PC-9 (cell line): ENCODE measurements at regions of chr11 and their contacts with region 1.

Region 1: DNA sequence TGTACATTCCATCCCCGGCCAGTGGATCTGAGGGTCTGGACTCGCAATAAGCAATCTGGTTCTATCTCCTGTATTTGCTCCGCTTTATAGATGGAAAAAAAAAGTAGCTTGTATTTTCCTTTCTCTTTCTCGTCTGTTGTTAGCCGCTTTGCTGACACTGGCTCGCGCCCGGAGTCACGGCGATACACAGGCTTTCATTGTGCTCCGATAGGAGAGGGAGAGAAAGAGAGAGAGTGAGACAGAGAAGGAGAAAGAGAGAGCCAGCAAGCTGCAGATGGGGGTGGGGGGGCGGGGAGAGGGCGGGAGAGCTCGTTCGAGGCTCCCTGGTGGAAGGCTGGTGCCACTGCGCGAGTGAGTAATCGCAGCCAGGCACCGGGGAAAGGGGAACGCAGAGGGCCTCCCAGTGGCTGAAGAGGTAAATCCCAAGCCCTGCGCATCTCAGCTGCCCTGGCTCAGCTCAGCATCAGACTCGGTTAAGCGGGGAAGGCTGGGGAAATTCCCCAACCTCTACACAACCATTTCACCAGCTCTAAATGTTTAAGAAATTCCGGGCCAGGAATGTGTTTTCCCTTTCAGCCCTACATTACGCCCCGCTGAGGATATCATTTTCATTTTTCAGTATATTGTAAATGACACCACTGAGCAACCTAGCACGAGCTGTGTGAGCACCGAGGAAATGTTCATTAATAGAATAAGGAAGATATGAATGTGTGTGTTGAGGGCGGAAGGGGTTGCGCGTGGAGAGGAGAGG is at the start of gene MAML2:
- DNase-seq: peak; percentile 89
- H3K4me3 ChIP-seq: peak within 1 kb of the TSS; percentile 78
- H3K27ac ChIP-seq: peak within 1 kb of the TSS; percentile 70
- H3K4me1 ChIP-seq: peaks cover 35% of the 10 kb centered on the region
- H3K27me3 ChIP-seq: no peaks in the 10 kb centered on the region
- CTCF ChIP-seq: peak; percentile 83
- total RNA-seq, gene MAML2: 17.7 and 28.3 TPM in 2 replicates

Region 2: GRCh38 chr11:95923728-95924413 is 419.3 kb before region 1 on chr11 and contains the start of gene MTMR2:
- CTCF ChIA-PET with region 1: no interaction called
- POLR2A ChIA-PET with region 1: no interaction called
- intact Hi-C with region 1: loop called (anchors 2 kb)
- DNase-seq: peak; percentile 72 to 77
- H3K4me3 ChIP-seq: peak within 1 kb of the TSS; percentile 67
- H3K27ac ChIP-seq: peak within 1 kb of the TSS; percentile 97
- H3K4me1 ChIP-seq: peaks cover 37% of the 10 kb centered on the region
- H3K27me3 ChIP-seq: no peaks in the 10 kb centered on the region
- CTCF ChIP-seq: no peak
- total RNA-seq, gene MTMR2: 41.6 and 60.7 TPM in 2 replicates

Region 3: GRCh38 chr11:95948637-95949036 is 394.5 kb before region 1 on chr11:
- CTCF ChIA-PET with region 1: no interaction called
- POLR2A ChIA-PET with region 1: no interaction called
- intact Hi-C with region 1: no loop called
- DNase-seq: no peak
- H3K4me3 ChIP-seq: no peak overlapping the region
- H3K27ac ChIP-seq: no peak overlapping the region
- H3K4me1 ChIP-seq: no peaks in the 10 kb centered on the region
- H3K27me3 ChIP-seq: no peaks in the 10 kb centered on the region
- CTCF ChIP-seq: no peak

Region 4: GRCh38 chr11:96037405-96037936 is 305.7 kb before region 1 on chr11:
- CTCF ChIA-PET with region 1: no interaction called
- POLR2A ChIA-PET with region 1: interaction called, 8 read pairs
- intact Hi-C with region 1: loop called (anchors 1 kb)
- DNase-seq: peak; percentile 66 to 100
- H3K4me3 ChIP-seq: peak overlapping the region; percentile 38; the same call in 1 of the 2 replicates
- H3K27ac ChIP-seq: peak overlapping the region; percentile 95
- H3K4me1 ChIP-seq: peaks cover 79% of the 10 kb centered on the region
- H3K27me3 ChIP-seq: no peaks in the 10 kb centered on the region
- CTCF ChIP-seq: no peak

Region 5: DNA sequence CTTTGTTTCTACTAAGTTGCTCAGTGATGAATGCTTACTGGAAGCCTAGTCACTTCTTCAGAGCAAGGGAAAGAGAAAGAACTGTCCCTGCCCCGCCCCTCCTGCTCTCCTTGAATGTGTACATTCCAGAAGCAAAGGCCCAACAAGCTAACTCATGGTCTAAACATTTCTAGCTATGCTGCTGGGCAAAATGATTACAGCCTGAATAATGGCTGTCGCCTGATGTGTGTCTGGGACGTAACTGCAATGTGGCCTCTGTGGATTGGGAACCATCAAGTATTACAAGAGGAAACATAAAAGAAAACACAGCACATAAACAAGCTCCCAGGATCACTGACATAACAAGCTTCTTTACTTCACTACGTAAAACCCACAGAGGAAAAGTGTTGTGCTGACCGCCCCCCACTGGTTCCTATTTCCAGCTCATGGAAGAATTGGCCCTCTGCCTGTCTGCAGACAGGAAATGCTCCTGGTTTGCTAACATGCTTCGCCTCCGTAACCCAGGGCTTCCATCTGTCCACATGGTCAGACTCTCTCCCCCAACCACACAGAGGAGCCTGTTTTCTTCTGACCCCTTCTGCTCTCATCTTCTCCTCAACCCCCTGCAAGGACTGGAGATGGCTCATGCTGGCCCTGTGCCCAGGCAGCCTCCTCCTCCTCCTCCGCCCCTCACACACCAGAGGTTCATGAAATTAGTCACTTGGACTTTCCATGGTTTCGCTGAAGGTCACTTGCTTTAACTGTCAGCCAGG is 187.3 kb before region 1 on chr11:
- CTCF ChIA-PET with region 1: interaction called, 15 read pairs
- POLR2A ChIA-PET with region 1: interaction called, 14 read pairs
- intact Hi-C with region 1: loop called (anchors 1 kb)
- DNase-seq: peak; percentile 80 to 95
- H3K4me3 ChIP-seq: no peak overlapping the region
- H3K27ac ChIP-seq: peak overlapping the region; percentile 73
- H3K4me1 ChIP-seq: peaks cover 45% of the 10 kb centered on the region
- H3K27me3 ChIP-seq: no peaks in the 10 kb centered on the region
- CTCF ChIP-seq: no peak; the same call in 1 of the 2 replicates

Region 6: DNA sequence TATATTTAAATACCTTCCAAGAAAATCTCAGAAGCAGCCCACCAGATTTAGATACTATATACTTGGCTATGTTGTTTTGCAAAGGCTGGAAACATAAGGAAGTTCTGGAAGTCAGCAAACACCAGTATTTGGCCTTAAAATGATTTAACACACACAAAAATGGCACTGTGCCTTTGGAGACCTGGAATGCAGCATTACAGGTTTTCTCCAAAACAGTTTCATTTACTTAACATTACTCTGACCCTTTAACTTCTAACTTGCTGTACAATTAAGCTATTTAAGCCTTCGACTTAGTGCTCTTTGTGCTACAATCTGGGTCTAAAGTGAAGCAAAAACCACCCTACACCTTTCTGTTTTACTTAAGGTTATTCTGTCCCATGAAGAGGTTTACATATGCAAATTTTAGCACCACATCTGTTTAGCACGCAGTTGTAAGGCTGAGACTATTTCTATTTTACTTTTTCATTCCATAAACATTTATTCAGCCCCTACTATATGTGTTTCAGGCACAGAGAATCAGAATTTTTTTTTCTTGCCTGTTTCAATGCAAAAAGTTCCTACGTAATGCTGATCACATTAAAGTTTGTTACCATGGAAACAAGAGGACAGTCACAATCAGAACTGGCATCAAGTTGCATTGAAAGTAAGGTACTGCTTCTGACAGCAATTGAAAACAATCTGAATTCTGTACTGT is 70.5 kb before region 1 on chr11:
- CTCF ChIA-PET with region 1: no interaction called
- POLR2A ChIA-PET with region 1: interaction called, 32 read pairs
- intact Hi-C with region 1: loop called (anchors 2 kb)
- DNase-seq: peak; percentile 43 to 97
- H3K4me3 ChIP-seq: peak overlapping the region; percentile 36
- H3K27ac ChIP-seq: peak overlapping the region; percentile 94
- H3K4me1 ChIP-seq: peaks cover 61% of the 10 kb centered on the region
- H3K27me3 ChIP-seq: no peaks in the 10 kb centered on the region
- CTCF ChIP-seq: no peak

Region 7: GRCh38 chr11:96314326-96315020 is 28.7 kb before region 1 on chr11:
- CTCF ChIA-PET with region 1: interaction called, 13 read pairs
- POLR2A ChIA-PET with region 1: interaction called, 9 read pairs
- intact Hi-C with region 1: loop called (anchors 1 kb)
- DNase-seq: peak; percentile 69 to 100
- H3K4me3 ChIP-seq: peak overlapping the region; percentile 41
- H3K27ac ChIP-seq: peak overlapping the region; percentile 96
- H3K4me1 ChIP-seq: peaks cover 100% of the 10 kb centered on the region
- H3K27me3 ChIP-seq: no peaks in the 10 kb centered on the region
- CTCF ChIP-seq: no peak